Cardiac septum (tissue), 1 donor: ENCODE measurements at regions of chr1 and their contacts with region 1.

Region 1: GRCh38 chr1:31166462-31166861 is 73.2 kb downstream of the NKAIN1 start:
- DNase-seq: no peak

Region 2: DNA sequence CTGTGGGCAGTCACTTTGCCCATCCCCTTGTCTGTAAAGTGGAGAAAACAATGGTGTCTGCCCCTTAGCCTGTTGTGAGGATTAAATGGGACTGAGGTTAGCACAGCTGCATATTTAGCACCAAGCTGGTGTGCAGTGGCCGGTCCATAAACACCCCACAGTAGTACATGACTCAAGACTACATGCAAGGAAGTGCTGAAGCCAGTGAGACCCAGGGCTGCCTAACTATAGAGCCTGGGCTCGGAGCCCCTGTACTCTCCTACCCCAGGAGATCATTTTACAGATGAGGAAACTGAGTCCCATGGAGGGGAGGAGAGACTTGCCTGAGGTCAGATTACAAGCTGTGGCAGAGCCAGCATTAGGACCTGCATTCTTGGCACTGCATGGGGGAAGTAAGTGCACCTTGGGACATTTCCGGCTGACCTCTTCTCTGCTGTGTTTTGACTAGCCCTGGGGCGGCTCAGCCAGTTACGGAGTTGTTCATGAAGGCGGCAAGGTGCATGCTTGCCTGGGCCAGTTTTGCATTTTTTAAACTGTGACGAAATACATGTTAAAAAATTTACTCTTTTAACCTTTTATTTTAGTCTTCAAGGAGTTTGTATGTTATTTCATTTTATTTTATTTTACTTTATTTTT is 249.8 kb after region 1 on chr1:
- intact Hi-C with region 1: loop called (anchors 5 kb)
- DNase-seq: no peak